ENCODE measurements at regions of chr13 and their contacts with region 1.

Region 1: DNA sequence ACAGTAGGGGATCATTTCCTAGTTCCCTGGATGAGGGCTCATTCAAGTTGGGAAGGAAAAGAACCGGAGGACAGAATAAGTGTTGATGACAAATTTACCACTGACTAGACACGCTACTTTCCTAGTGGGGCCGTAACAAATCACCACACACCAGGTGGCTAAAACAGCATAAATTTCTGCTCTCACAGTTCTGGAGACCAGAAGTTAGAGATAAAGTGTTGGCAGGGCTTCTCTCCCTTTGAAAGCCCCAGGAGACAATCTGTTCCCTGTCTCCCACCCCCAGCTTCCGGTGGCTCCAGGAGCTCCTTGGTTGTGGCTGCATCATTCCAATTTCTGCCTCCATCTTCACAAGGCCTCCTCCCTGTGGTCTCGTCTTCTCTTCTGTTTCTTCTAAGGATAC is 65.4 kb upstream of the ARGLU1 start:
- DNase-seq: no peak
- ATAC-seq: no peak
- H3K4me3 Mint-ChIP-seq: no peak overlapping the region
- H3K27ac Mint-ChIP-seq: no peak overlapping the region
- H3K4me1 Mint-ChIP-seq: no peaks in the 10 kb centered on the region
- H3K27me3 Mint-ChIP-seq: peaks cover 2% of the 10 kb centered on the region

Region 2: GRCh38 chr13:106619688-106620555 is 13.4 kb before region 1 on chr13:
- CTCF ChIA-PET with region 1: interaction called, 15 read pairs
- POLR2A ChIA-PET with region 1: no interaction called
- DNase-seq: peak; percentile 32
- ATAC-seq: peak; percentile 82
- H3K4me3 Mint-ChIP-seq: no peak overlapping the region
- H3K27ac Mint-ChIP-seq: no peak overlapping the region
- H3K4me1 Mint-ChIP-seq: no peaks in the 10 kb centered on the region
- H3K27me3 Mint-ChIP-seq: peaks cover 23% of the 10 kb centered on the region

Measured in activated CD8-positive, alpha-beta T cell treated with anti-CD3 and anti-CD28 coated beads, Interleukin-2, amount 10 ng/mL, durations not matched to agents 7 days and 5 days (primary cell).